ENCODE measurements at regions of chr9 and their contacts with region 1.

Region 1: DNA sequence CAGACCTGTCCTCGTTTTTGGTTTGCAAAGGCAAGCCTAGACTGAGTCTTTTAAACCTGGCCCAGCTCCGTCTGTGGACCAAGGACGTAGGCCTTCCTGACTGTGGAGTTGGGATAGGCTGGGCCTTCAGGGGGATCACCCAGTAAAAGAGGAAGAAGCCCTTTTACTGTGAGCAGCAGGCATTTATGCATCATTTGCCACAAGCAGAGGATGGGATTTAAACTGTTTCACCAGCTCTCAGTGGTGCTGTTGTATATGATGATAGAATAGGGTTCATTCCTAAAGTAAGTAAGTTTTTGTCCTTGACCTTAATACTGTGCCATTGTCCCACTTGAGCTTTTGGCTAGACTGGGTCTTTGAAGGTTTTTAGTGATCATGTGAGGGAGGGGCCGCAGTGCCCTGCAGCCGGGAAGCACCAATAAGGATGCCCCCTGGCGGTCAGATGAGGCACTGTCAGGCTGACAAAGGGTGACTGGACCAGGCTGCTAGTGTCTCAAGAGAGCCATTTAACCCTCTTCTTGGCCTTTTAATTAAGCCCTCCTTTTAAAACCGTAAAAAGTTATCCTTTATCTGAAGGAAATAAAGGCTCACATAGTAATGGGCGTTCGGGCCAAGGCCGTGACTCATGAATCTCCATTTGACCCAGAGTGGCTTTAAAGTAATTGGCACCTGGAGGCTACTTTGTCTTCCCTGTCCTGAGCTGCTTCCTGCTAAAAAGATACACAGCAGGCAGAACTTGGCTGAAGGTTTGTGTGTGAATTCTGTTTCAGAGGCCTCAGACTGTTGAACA is 74.0 kb downstream of the UBAP1 start:
- DNase-seq: peak; percentile 67 to 71
- ATAC-seq: peak; percentile 59 to 76; a peak in 5 of 6 replicates
- H3K4me3 ChIP-seq: no peak overlapping the region
- H3K27ac ChIP-seq: peak overlapping the region; percentile 73 to 76
- H3K4me1 ChIP-seq: peaks cover 38% of the 10 kb centered on the region
- CTCF ChIP-seq: peak; percentile 93
- EP300 ChIP-seq: no peak
- POLR2A ChIP-seq: no peak
- RAD21 ChIP-seq: peak; percentile 61 to 69

Region 2: DNA sequence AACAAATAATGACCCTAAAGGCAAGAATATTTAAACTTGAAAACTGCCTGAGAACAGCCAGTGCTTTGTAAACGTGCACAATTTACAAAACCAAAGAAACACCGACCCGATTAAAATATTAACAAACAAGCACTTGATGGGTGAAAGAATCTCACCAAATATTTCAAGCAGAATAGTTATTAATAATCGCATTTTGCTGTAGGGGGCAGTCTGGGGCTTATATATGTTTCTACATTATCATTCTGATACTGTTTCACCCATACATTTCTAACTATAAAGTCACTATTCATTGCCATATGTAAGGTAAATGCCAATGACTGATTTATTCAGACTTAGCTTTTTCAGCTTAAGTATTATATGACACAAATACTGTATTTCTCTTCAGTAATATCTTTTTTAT is 241.9 kb before region 1 on chr9:
- CTCF ChIA-PET with region 1: interaction called, 13 read pairs
- POLR2A ChIA-PET with region 1: no interaction called
- DNase-seq: peak; percentile 23 to 27
- ATAC-seq: peak in 1 of 2 experiments; percentile 67; a peak in 3 of 6 replicates
- H3K4me3 ChIP-seq: no peak overlapping the region
- H3K27ac ChIP-seq: no peak overlapping the region
- H3K4me1 ChIP-seq: peaks cover 6% of the 10 kb centered on the region; the same call in 1 of the 3 replicates
- CTCF ChIP-seq: peak; percentile 52
- EP300 ChIP-seq: no peak
- POLR2A ChIP-seq: no peak
- RAD21 ChIP-seq: peak; percentile 46 to 65; a peak in 4 of 5 replicates

Region 3: GRCh38 chr9:34098307-34098706 is 154.6 kb before region 1 on chr9:
- CTCF ChIA-PET with region 1: interaction called, 10 read pairs
- POLR2A ChIA-PET with region 1: no interaction called
- DNase-seq: no peak
- ATAC-seq: no peak
- H3K4me3 ChIP-seq: no peak overlapping the region
- H3K27ac ChIP-seq: no peak overlapping the region
- H3K4me1 ChIP-seq: no peaks in the 10 kb centered on the region
- CTCF ChIP-seq: no peak
- EP300 ChIP-seq: no peak
- POLR2A ChIP-seq: no peak
- RAD21 ChIP-seq: no peak

Region 4: GRCh38 chr9:34158362-34158869 is 94.4 kb before region 1 on chr9:
- CTCF ChIA-PET with region 1: interaction called, 14 read pairs
- POLR2A ChIA-PET with region 1: no interaction called
- DNase-seq: peak; percentile 73 to 95
- ATAC-seq: peak; percentile 90 to 94
- H3K4me3 ChIP-seq: no peak overlapping the region
- H3K27ac ChIP-seq: peak overlapping the region; percentile 84 to 94
- H3K4me1 ChIP-seq: peaks cover 54% of the 10 kb centered on the region
- CTCF ChIP-seq: no peak
- EP300 ChIP-seq: peak in 1 of 2 experiments; percentile 32; a peak in 2 of 5 replicates
- POLR2A ChIP-seq: no peak
- RAD21 ChIP-seq: no peak

Region 5: DNA sequence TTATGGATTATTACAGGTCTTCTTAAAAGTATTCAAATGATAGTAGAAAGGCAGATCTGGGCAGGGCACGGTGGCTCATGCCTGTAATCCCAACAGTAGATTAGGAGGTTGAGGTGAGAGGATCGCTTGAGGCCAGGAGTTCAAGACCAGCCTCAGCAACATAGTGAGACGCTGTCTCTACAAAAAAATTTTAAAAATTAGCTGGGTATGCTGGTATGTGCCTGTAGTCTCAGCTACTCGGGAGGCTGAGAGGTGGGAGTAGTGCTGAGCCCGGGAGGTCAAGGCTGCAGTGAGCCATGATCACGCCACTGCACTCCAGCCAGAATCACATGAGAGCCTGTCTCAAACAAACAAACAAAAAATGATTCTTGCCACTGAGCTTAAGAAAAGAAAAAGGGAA is 30.4 kb before region 1 on chr9:
- CTCF ChIA-PET with region 1: interaction called, 71 read pairs
- POLR2A ChIA-PET with region 1: no interaction called
- DNase-seq: no peak
- ATAC-seq: no peak; a peak in 1 of 6 replicates
- H3K4me3 ChIP-seq: no peak overlapping the region
- H3K27ac ChIP-seq: peak overlapping the region; percentile 61 to 79
- H3K4me1 ChIP-seq: peaks cover 59% of the 10 kb centered on the region
- CTCF ChIP-seq: no peak
- EP300 ChIP-seq: no peak
- POLR2A ChIP-seq: no peak
- RAD21 ChIP-seq: no peak

Region 6: GRCh38 chr9:34291023-34291422 is 38.2 kb after region 1 on chr9:
- CTCF ChIA-PET with region 1: interaction called, 13 read pairs
- POLR2A ChIA-PET with region 1: no interaction called
- DNase-seq: no peak
- ATAC-seq: no peak
- H3K4me3 ChIP-seq: no peak overlapping the region
- H3K27ac ChIP-seq: no peak overlapping the region
- H3K4me1 ChIP-seq: no peaks in the 10 kb centered on the region
- CTCF ChIP-seq: no peak
- EP300 ChIP-seq: no peak
- POLR2A ChIP-seq: no peak
- RAD21 ChIP-seq: no peak

Region 7: GRCh38 chr9:35258676-35259474 is 1006.0 kb after region 1 on chr9:
- CTCF ChIA-PET with region 1: no interaction called
- POLR2A ChIA-PET with region 1: no interaction called
- DNase-seq: peak; percentile 13 to 75
- ATAC-seq: peak; percentile 68 to 84; a peak in 5 of 6 replicates
- H3K4me3 ChIP-seq: no peak overlapping the region
- H3K27ac ChIP-seq: no peak overlapping the region
- H3K4me1 ChIP-seq: no peaks in the 10 kb centered on the region
- CTCF ChIP-seq: peak; percentile 73
- EP300 ChIP-seq: no peak
- POLR2A ChIP-seq: no peak
- RAD21 ChIP-seq: peak; percentile 76 to 77

Measured in A549 (cell line).